Heart left ventricle (tissue), 16 donors: ENCODE measurements at regions of chr16 and their contacts with region 1.

Region 1: DNA sequence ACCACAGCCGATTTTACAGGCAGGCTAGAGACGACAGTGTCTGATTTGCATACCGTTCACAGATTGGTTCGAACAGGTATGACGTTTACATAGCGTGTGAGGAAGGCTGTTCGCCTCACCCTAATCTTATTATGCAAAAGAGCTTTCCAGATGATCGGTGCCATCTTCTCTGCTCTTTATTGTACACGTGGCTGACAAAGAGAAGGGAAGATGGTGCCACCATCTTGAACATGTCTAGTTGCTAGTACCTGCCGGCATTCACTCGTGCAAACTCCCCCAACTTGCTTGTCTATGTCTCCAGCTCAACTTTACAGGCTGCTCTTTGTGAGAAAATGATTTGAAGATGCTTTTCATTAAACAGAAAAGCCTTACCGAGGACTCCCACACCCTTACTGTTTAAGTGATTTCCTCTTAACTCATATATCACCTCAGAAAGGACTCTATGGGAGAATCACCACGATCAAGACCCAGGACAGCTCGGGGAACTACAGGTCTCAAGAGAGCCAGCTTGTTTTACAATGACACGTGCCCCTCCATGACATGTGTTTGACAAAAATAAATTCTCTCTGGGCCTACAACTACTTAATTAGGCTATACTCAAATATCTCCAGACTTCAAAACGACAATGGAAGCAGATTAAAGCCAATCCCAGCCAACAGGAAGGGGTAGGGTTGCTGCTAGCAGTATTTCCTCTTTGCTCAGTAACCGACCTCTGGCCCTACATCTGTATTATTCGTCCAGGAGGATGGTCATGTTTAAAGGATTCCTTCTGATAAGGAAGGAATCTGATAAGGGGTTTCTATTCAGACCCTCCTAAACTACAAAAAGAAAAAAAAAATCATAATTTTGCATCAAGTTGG is 480.6 kb downstream of the TMEM114 start:
- DNase-seq: no peak
- ATAC-seq: peak in 1 of 4 donors; percentile 71
- H3K4me3 ChIP-seq: no peak overlapping the region
- H3K27ac ChIP-seq: no peak overlapping the region
- H3K4me1 ChIP-seq: no peaks in the 10 kb centered on the region
- H3K27me3 ChIP-seq: no peaks in the 10 kb centered on the region
- CTCF ChIP-seq: no peak
- POLR2A ChIP-seq: no peak

Region 2: DNA sequence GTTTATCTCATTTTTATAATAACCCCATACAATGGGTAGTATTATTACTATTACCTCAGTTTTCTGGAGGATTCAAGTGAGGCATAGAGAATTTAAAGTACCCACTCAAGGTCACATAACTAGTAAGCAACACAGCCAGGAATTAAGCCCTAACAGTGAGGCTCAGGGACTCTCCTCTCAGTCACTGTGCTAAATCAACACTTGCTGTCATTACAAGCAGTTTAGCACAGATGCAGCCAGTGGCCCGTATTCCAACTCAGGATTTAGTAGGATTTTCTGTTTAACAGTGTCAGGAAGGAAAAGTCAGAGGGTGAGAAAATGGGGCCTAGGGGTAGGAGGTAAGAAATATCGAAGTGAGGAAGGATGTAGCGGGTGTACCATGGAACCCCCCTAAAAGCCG is 56.3 kb before region 1 on chr16:
- intact Hi-C with region 1: loop called in 1 of 10 experiments (anchors 10 kb)
- DNase-seq: no peak
- ATAC-seq: no peak
- H3K4me3 ChIP-seq: no peak overlapping the region
- H3K27ac ChIP-seq: no peak overlapping the region
- H3K4me1 ChIP-seq: no peaks in the 10 kb centered on the region
- H3K27me3 ChIP-seq: no peaks in the 10 kb centered on the region
- CTCF ChIP-seq: no peak
- POLR2A ChIP-seq: no peak